BJ (cell line): ENCODE measurements at regions of chr2 and their contacts with region 1.

Region 1: DNA sequence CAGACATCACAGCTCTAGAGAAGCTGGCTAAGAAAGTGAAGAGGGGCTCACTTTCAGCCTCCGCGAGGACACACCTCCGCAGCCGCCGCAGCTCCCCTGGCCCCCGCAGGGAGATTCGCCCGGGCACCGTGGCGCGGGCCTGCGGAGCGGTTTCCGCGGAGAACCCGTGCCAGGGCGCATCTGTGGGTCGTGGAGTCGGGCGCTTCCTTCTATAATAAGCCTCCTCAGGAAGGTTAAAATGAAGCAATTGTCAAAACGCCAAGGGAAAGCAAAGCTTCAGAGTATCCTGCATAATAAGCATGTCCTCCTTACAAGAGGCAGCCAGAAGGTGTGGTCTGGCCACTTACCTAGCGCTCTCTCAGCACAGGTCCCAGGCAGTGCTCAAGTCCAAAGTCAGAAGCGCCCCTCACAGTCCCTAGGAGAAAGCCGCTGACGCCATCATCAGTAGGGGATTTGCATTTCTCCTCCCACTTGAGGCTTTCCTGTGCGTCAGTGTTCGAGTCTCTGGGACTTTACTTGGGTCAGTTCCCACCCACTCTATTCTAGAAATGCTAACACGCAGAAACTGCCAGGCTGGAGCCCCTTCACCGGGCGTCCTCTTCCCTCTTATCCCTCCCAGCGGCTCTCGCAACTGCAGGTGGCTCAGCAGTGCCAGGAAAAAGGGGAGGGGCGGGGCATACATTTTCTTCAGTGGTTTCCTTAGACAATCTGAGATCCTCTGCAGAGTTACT is at the start of gene STAT4:
- DNase-seq: no peak
- H3K4me3 ChIP-seq: peak within 1 kb of the TSS; percentile 31
- H3K27me3 ChIP-seq: no peaks in the 10 kb centered on the region
- CTCF ChIP-seq: no peak
- polyA plus RNA-seq, gene STAT4: 1.3 and 1.5 TPM in 2 replicates

Region 2: GRCh38 chr2:191066197-191066918 is 84.4 kb before region 1 on chr2:
- CTCF ChIA-PET with region 1: interaction called, 31 read pairs
- POLR2A ChIA-PET with region 1: no interaction called
- DNase-seq: no peak
- H3K4me3 ChIP-seq: no peak overlapping the region
- H3K27me3 ChIP-seq: no peaks in the 10 kb centered on the region
- CTCF ChIP-seq: no peak

Region 3: GRCh38 chr2:191189112-191189635 is 38.4 kb after region 1 on chr2:
- CTCF ChIA-PET with region 1: no interaction called
- POLR2A ChIA-PET with region 1: no interaction called
- DNase-seq: no peak
- H3K4me3 ChIP-seq: no peak overlapping the region
- H3K27me3 ChIP-seq: no peaks in the 10 kb centered on the region
- CTCF ChIP-seq: no peak

Region 4: DNA sequence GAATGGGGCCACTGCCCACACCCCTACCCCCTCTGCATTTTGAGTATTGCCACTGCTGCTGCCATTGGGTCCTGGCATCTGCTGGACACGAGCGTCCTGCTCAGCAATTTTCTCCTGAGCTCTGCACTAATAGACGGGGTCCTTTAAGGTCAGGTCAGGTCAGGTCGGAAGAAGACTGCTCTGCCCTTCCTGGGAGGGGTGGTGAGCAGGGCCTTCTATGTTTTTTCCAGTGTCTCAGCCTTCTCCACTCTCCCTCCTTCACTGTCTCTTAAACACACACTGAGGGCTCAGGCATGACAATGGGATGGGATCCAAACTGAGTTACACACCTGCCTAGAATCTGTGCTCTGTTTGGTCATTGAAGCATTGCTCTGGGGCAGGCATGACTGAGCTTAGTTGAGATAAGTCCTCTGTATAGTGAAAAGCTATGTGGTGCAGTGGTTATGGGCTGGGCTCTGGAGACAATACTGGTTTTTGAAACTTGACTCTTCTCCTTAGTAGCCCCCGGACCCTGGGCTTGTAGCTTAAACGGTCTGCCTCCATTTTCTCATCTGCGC is 105.1 kb after region 1 on chr2:
- CTCF ChIA-PET with region 1: no interaction called
- POLR2A ChIA-PET with region 1: no interaction called
- DNase-seq: no peak
- H3K4me3 ChIP-seq: no peak overlapping the region
- H3K27me3 ChIP-seq: no peaks in the 10 kb centered on the region
- CTCF ChIP-seq: no peak

Region 5: DNA sequence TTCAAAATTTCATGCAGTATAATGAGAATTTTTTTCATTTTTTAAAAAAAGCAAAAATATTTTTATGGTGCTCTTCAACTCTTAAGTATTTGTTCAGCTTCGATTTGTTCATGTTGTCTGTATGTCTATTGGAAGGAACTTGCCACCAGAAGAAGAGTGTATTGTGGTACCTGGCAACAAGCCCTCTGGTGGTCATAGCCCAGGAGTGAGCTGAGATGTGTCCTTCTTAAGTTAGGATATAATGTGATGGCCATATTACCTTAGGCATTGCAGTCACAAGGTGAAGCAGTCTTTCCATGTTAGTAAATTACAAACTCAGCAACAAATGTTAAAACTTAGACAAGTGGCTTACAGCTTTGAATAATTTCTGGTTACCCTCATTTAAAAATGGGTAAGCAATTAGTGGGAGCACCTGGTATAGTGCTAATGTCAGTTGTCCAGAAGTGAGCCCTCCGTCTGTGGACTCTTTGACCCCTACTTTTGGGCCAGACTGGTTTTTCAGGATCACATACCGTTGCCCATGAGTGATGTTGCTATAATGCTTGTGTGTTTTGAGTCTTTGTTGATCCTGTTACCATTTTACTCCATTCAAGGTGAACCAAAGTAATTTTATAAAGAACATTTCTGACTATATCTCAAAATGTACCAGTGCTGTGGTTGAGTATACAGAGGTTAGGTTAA is 151.8 kb after region 1 on chr2:
- CTCF ChIA-PET with region 1: no interaction called
- POLR2A ChIA-PET with region 1: no interaction called
- DNase-seq: no peak
- H3K4me3 ChIP-seq: no peak overlapping the region
- H3K27me3 ChIP-seq: no peaks in the 10 kb centered on the region
- CTCF ChIP-seq: no peak